Ascending aorta (tissue), 2 donors: ENCODE measurements at regions of chr14 and their contacts with region 1.

Region 1: GRCh38 chr14:100239840-100240724 is 1.1 kb downstream of the YY1 start:
- DNase-seq: peak; percentile 65 to 94
- H3K4me3 ChIP-seq: peak overlapping the region; percentile 83 to 100
- H3K27ac ChIP-seq: peak overlapping the region; percentile 91 to 93
- H3K4me1 ChIP-seq: peaks cover 9 to 32% of the 10 kb centered on the region in 2 donors
- H3K27me3 ChIP-seq: no peaks in the 10 kb centered on the region
- CTCF ChIP-seq: peak; percentile 51 to 79 (median 65)

Region 2: GRCh38 chr14:99480917-99481744 is 759.0 kb before region 1 on chr14 and contains the start of gene CCNK:
- intact Hi-C with region 1: loop called (anchors 1 kb)
- DNase-seq: peak; percentile 100
- H3K4me3 ChIP-seq: peak within 1 kb of the TSS; percentile 87 to 95
- H3K27ac ChIP-seq: peak within 1 kb of the TSS; percentile 96 to 98
- H3K4me1 ChIP-seq: peaks cover 6 to 34% of the 10 kb centered on the region in 2 donors
- H3K27me3 ChIP-seq: no peaks in the 10 kb centered on the region
- CTCF ChIP-seq: no peak
- total RNA-seq, gene CCNK: 21.9 TPM

Region 3: GRCh38 chr14:99729991-99730868 is 509.9 kb before region 1 on chr14:
- intact Hi-C with region 1: loop called (anchors 10 kb)
- DNase-seq: peak; percentile 1 to 81
- H3K4me3 ChIP-seq: peak overlapping the region; percentile 52 to 85
- H3K27ac ChIP-seq: peak overlapping the region; percentile 22 to 30
- H3K4me1 ChIP-seq: peaks cover 3 to 13% of the 10 kb centered on the region in 2 donors
- H3K27me3 ChIP-seq: no peaks in the 10 kb centered on the region
- CTCF ChIP-seq: peak; percentile 66 to 89 (median 78)

Region 4: DNA sequence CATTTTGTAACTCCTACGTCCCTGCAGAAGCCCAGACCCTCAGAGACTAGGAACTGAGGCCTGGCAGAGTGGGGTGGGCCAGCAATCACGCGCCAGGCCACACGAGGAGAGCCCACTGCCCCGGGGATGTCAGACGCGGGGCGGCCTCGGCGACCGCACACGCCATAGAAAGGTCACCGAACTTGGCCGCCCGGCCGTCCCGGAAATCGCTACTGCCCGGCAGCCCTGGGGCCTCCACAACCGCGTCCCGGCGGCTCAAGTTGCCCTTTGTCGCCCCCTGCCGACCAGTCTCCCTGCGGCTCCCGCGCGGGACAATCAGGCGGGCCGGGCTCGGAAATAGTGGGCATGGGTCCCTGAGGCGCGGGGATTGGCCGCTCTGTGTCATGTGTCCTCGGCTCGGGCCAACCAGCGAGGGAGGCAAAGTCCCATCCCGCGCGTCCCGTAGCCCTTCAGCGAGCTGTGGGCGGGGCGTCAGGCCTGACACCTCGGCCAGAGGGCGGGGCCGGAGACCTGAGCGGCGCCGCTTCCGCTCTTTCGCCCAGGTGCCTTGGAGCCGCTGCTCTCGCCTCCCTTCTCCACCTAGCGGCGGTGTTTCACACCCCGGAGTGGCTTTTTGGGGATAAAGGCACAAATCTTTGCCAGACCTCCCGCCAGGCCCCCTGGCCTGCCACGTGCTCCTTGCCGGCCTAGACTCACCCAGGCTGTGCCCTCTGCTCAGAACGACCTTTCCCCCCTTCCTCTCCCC is 47.2 kb before region 1 on chr14:
- intact Hi-C with region 1: loop called (anchors 1 kb)
- DNase-seq: peak; percentile 97 to 100
- H3K4me3 ChIP-seq: peak overlapping the region; percentile 54 to 68
- H3K27ac ChIP-seq: peak overlapping the region; percentile 84 to 94
- H3K4me1 ChIP-seq: peaks cover 0 to 9% of the 10 kb centered on the region in 2 donors
- H3K27me3 ChIP-seq: no peaks in the 10 kb centered on the region
- CTCF ChIP-seq: peak; percentile 79 to 90 (median 81)

Region 5: GRCh38 chr14:100213956-100214774 is 25.9 kb before region 1 on chr14:
- intact Hi-C with region 1: loop called (anchors 1 kb)
- DNase-seq: peak in 1 of 2 donors; percentile 91
- H3K4me3 ChIP-seq: peak overlapping the region; percentile 82 to 83
- H3K27ac ChIP-seq: peak overlapping the region; percentile 92 to 97
- H3K4me1 ChIP-seq: peaks cover 0 to 10% of the 10 kb centered on the region in 2 donors
- H3K27me3 ChIP-seq: no peaks in the 10 kb centered on the region
- CTCF ChIP-seq: no peak

Region 6: GRCh38 chr14:100285021-100285912 is 45.2 kb after region 1 on chr14:
- intact Hi-C with region 1: loop called (anchors 2 kb)
- DNase-seq: peak in 1 of 2 donors; percentile 80
- H3K4me3 ChIP-seq: peak overlapping the region; percentile 82 to 93
- H3K27ac ChIP-seq: peak overlapping the region; percentile 85 to 86
- H3K4me1 ChIP-seq: peaks cover 0 to 5% of the 10 kb centered on the region in 2 donors
- H3K27me3 ChIP-seq: no peaks in the 10 kb centered on the region
- CTCF ChIP-seq: peak; percentile 86 to 92 (median 91)

Region 7: DNA sequence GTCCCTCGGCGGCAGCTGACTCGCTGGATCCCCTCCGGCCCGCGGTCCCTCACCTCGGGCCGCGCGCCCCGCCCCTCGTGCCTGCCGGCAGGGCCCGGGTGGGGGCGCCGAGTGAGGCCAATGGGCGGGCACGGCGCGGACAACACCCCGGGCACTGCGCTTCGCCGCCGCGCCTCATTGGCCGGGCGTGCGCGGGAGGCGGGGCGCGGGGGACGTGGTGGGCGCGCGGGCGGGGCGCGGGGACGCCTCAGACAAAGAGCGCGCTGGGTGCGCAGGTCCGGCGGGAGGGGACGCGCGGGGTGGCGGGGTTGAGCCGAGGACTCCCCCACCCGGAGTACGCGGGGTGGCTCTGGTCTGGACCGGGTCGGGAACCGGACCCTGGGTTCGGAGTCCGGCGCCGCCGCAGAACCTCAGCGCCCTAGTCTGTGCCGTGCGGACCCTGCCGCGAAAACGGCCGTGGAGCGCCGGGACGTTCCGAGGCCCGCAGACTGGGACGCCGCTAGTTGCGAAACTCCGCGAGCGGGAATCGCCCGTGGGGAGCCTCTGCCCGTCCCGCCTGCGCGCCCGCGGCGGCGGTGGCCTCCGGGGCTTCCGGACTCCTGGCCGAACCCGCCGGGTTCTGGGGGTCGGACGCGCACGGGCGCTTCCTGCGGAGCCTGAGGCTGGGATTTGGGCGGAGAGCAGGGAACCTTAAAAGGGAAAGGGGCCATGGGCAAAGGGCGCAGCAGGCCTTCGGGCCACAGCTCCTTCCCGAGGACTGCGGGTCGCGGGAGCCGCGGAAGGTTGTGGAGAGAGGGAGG is 66.5 kb after region 1 on chr14 and contains the start of gene SLC25A29:
- intact Hi-C with region 1: loop called (anchors 1 kb)
- DNase-seq: peak; percentile 54 to 95
- H3K4me3 ChIP-seq: peak within 1 kb of the TSS; percentile 90 to 95
- H3K27ac ChIP-seq: peak within 1 kb of the TSS; percentile 74 to 83
- H3K4me1 ChIP-seq: peaks cover 3 to 12% of the 10 kb centered on the region in 2 donors
- H3K27me3 ChIP-seq: no peaks in the 10 kb centered on the region
- CTCF ChIP-seq: no peak
- total RNA-seq, gene SLC25A29: 193 TPM